ENCODE measurements at regions of chr19 and their contacts with region 1.

Region 1: GRCh38 chr19:32345261-32346207 is at the start of gene ZNF507:
- DNase-seq: peak; percentile 91
- ATAC-seq: peak; percentile 83
- H3K4me3 Mint-ChIP-seq: peak within 1 kb of the TSS; percentile 98
- H3K27ac Mint-ChIP-seq: peak within 1 kb of the TSS; percentile 97
- H3K4me1 Mint-ChIP-seq: peaks cover 33% of the 10 kb centered on the region
- H3K27me3 Mint-ChIP-seq: peaks cover 3% of the 10 kb centered on the region
- CTCF ChIP-seq: no peak
- total RNA-seq, gene ZNF507: 24.2 to 25.6 TPM

Region 2: DNA sequence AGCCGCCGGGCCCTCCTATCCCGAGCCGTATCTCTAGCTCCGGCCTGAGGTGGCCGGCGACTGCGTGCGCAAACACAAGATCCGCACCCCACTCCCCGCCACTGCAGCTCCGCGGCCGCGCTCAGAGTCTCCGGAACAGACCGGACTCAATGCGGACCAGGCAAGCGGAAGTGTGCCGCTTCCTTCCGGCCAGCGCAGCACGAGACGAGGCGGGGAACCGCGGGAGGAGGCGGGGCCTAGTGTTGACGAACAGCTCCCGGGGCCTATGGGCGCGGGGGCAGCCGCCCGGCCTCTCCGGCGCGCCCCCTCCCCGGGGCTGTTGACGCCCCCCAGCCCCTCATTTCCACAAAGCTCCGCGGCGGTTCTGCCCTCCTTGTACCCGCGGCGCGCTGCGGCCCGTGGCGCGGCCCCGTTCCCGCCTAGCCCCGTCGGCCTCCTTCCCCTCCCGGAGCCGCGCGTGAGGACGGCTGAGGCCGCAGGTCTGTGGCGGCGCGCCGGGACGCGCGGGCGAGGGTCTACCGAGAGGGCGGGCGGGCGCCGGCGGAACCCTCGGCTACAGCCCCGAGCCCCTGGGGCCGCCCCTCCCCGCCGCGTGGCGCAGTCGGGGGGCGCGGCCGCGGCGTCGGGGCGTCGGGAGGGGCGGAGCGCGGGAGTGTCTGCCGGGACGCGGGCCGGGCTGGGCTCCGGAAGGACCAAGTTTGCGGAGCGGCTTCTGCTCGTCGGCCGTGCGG is 60.1 kb after region 1 on chr19 and contains the start of gene DPY19L3:
- CTCF ChIA-PET with region 1: no interaction called
- POLR2A ChIA-PET with region 1: interaction called, 21 read pairs
- intact Hi-C with region 1: no loop called
- DNase-seq: peak; percentile 94
- ATAC-seq: peak; percentile 96
- H3K4me3 Mint-ChIP-seq: peak within 1 kb of the TSS; percentile 83
- H3K27ac Mint-ChIP-seq: peak within 1 kb of the TSS; percentile 88
- H3K4me1 Mint-ChIP-seq: peaks cover 21% of the 10 kb centered on the region
- H3K27me3 Mint-ChIP-seq: no peaks in the 10 kb centered on the region
- CTCF ChIP-seq: no peak
- total RNA-seq, gene DPY19L3: 10.4 to 12.4 TPM

Region 3: GRCh38 chr19:32570081-32570785 is 224.7 kb after region 1 on chr19:
- CTCF ChIA-PET with region 1: interaction called, 8 read pairs
- POLR2A ChIA-PET with region 1: no interaction called
- intact Hi-C with region 1: loop called (anchors 10 kb)
- DNase-seq: peak; percentile 69
- ATAC-seq: peak; percentile 73
- H3K4me3 Mint-ChIP-seq: no peak overlapping the region
- H3K27ac Mint-ChIP-seq: no peak overlapping the region
- H3K4me1 Mint-ChIP-seq: peaks cover 13% of the 10 kb centered on the region
- H3K27me3 Mint-ChIP-seq: peaks cover 10% of the 10 kb centered on the region
- CTCF ChIP-seq: peak; percentile 69